Calu3 (cell line): ENCODE measurements at regions of chrX and their contacts with region 1.

Region 1: GRCh38 chrX:16882702-16883486 is 12.7 kb upstream of the RBBP7 start:
- DNase-seq: peak; percentile 76
- H3K4me3 Mint-ChIP-seq: peak overlapping the region; percentile 73
- H3K27ac Mint-ChIP-seq: peak overlapping the region; percentile 50
- H3K4me1 Mint-ChIP-seq: peaks cover 9% of the 10 kb centered on the region
- H3K27me3 Mint-ChIP-seq: no peaks in the 10 kb centered on the region
- CTCF ChIP-seq: peak; percentile 50

Region 2: GRCh38 chrX:16552546-16552945 is 330.3 kb before region 1 on chrX:
- CTCF ChIA-PET with region 1: no interaction called
- intact Hi-C with region 1: no loop called
- DNase-seq: peak; percentile 2
- H3K4me3 Mint-ChIP-seq: no peak overlapping the region
- H3K27ac Mint-ChIP-seq: no peak overlapping the region
- H3K4me1 Mint-ChIP-seq: peaks cover 12% of the 10 kb centered on the region
- H3K27me3 Mint-ChIP-seq: no peaks in the 10 kb centered on the region
- CTCF ChIP-seq: no peak

Region 3: GRCh38 chrX:16953606-16954220 is 70.8 kb after region 1 on chrX:
- CTCF ChIA-PET with region 1: interaction called, 9 read pairs
- intact Hi-C with region 1: loop called (anchors 5 kb)
- DNase-seq: peak; percentile 45
- H3K4me3 Mint-ChIP-seq: peak overlapping the region; percentile 25
- H3K27ac Mint-ChIP-seq: peak overlapping the region; percentile 96
- H3K4me1 Mint-ChIP-seq: peaks cover 35% of the 10 kb centered on the region
- H3K27me3 Mint-ChIP-seq: no peaks in the 10 kb centered on the region
- CTCF ChIP-seq: no peak